Vagina (tissue), 2 donors: ENCODE measurements at regions of chr10 and their contacts with region 1.

Region 1: GRCh38 chr10:62095181-62096071 is 173.2 kb downstream of the RTKN2 start:
- DNase-seq: no peak
- H3K4me3 ChIP-seq: no peak overlapping the region
- H3K27ac ChIP-seq: peak overlapping the region; percentile 70
- H3K4me1 ChIP-seq: peaks cover 69% of the 10 kb centered on the region
- H3K27me3 ChIP-seq: no peaks in the 10 kb centered on the region
- CTCF ChIP-seq: no peak
- POLR2A ChIP-seq: no peak

Region 2: DNA sequence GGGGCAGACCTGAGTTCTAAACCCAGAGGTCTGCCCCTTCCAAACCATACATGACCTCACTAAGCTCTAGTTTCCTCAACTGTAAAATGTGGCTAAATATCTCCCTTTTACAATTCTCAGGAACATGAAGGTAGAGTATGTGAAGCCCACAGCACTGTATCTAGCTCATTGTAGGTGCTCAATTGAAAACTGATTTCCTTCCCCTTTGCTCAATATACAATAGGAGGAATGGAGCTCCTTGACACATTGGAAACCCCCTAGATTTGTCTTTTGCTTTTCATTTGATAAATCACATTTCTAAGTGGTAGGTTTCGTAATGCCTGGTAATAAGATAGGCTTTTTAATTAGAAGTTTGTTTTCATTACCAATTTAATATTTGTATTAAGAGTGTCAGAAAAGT is 40.6 kb before region 1 on chr10:
- intact Hi-C with region 1: loop called (anchors 5 kb)
- DNase-seq: no peak
- H3K4me3 ChIP-seq: peak overlapping the region; percentile 4 to 63
- H3K27ac ChIP-seq: peak overlapping the region; percentile 97
- H3K4me1 ChIP-seq: peaks cover 89% of the 10 kb centered on the region
- H3K27me3 ChIP-seq: no peaks in the 10 kb centered on the region
- CTCF ChIP-seq: no peak
- POLR2A ChIP-seq: no peak